Activated CD4-positive, alpha-beta memory T cell treated with anti-CD3 and anti-CD28 coated beads, Interleukin-2, amount 10 ng/mL, durations not matched to agents 7 days and 5 days (primary cell): ENCODE measurements at regions of chr2 and their contacts with region 1.

Region 1: DNA sequence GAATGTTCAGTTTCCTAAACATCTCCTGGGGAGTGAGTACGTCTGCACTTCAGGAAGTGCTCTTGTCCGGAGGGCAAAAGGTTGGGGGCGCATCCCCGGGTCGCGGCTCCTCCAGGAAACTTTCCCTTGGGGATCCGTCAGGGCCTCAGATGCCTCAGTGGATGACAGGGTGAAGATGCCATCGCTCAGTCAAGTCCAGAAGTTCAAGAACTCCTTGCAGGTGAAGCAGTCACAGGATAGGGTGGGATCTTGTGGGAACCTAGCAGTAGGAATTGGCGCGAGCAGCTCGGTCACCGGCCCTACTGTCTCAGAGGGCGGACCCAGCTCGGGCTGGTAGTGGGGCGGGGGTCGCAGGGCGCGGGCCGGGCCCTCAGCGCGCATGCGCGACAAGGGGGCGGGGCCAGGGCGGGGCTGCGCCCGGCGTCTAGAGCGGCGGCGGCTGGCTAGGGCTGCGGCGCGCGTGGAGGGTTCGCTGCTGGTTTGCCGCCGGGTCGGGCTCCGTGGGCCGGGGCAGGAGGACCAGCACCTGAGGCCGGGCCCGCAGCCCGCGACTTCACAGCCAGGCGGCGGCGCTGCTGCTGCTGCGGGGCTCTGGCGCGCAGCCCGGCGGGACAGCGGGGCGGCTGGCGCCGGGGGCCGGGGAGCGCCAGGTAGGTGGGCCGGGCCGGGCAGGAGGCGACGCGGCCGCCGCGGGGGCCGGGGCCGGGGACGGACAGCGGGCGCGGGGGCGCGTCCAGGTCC is at the start of gene INPP4A:
- DNase-seq: peak; percentile 81
- H3K4me3 Mint-ChIP-seq: peak within 1 kb of the TSS; percentile 88
- H3K27ac Mint-ChIP-seq: peak within 1 kb of the TSS; percentile 92
- H3K4me1 Mint-ChIP-seq: peaks cover 52% of the 10 kb centered on the region
- H3K27me3 Mint-ChIP-seq: no peaks in the 10 kb centered on the region
- total RNA-seq, gene INPP4A: 123 to 127 TPM

Region 2: DNA sequence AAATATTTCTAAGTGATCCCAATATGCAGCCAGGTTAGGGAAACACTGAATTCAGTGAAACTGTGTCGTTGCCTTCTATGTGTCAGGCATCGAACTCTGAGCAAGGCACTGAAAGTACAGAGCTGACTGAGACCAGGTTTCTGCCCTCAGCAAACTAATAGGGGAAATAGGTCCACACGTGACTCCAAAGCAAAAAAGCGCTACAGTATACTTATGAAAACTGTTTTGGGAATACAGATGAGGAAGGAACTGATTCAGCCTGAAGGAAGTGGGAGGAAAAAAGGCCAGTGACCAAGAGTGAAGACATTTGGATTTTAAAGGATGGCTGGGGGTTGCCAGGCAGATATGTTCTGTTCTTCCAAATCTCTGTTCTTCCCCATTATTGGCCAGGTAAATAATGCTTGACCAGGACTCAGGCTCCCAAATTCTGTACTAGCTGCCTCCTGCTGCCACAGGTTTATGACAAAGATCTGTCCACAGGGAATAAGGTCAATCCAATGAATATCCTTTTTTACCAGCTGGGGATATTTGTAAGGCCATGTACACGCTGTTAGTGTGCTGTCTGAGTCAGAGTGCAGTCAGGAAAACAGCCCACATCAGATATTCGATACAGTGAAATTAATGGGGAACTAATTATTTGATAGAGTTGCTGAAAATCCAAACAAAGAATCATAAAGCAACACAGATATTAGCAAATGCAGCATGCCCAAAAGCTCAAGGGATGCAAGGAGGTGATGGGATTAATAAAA is 24.5 kb before region 1 on chr2:
- CTCF ChIA-PET with region 1: no interaction called
- POLR2A ChIA-PET with region 1: no interaction called
- DNase-seq: no peak
- H3K4me3 Mint-ChIP-seq: no peak overlapping the region
- H3K27ac Mint-ChIP-seq: no peak overlapping the region
- H3K4me1 Mint-ChIP-seq: no peaks in the 10 kb centered on the region
- H3K27me3 Mint-ChIP-seq: no peaks in the 10 kb centered on the region

Region 3: DNA sequence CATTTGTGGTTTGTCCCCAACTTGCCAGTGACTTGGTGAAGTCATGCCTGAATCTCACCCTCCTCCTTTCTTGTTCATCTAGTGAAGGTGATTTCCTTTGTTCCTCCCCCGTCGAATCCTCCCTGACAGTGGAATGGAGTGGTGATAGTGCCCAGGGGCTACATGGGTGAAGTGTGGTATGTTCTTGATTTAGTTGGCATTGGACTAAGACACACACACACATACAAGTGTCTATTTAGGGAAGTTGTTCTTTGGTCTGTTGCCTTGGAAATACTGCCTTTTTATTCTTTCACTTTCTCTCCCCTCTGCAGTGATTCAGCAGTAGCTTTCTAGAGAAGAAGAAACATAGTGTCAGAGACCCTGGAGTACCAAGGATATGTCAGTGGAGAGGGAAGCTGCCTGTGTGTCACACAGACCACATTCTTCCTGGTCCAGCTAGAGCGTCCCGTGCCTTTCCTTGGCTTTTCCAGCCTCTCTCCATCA is 10.9 kb after region 1 on chr2:
- CTCF ChIA-PET with region 1: interaction called, 36 read pairs
- POLR2A ChIA-PET with region 1: interaction called, 471 read pairs
- DNase-seq: no peak
- H3K4me3 Mint-ChIP-seq: peak overlapping the region; percentile 61
- H3K27ac Mint-ChIP-seq: peak overlapping the region; percentile 85
- H3K4me1 Mint-ChIP-seq: peaks cover 97% of the 10 kb centered on the region
- H3K27me3 Mint-ChIP-seq: no peaks in the 10 kb centered on the region

Region 4: GRCh38 chr2:98479959-98480524 is 35.4 kb after region 1 on chr2:
- CTCF ChIA-PET with region 1: interaction called, 10 read pairs
- POLR2A ChIA-PET with region 1: interaction called, 500 read pairs
- DNase-seq: peak; percentile 56
- H3K4me3 Mint-ChIP-seq: peak overlapping the region; percentile 18
- H3K27ac Mint-ChIP-seq: peak overlapping the region; percentile 95
- H3K4me1 Mint-ChIP-seq: peaks cover 100% of the 10 kb centered on the region
- H3K27me3 Mint-ChIP-seq: no peaks in the 10 kb centered on the region